ENCODE measurements at regions of chr14 and their contacts with region 1.

Region 1: DNA sequence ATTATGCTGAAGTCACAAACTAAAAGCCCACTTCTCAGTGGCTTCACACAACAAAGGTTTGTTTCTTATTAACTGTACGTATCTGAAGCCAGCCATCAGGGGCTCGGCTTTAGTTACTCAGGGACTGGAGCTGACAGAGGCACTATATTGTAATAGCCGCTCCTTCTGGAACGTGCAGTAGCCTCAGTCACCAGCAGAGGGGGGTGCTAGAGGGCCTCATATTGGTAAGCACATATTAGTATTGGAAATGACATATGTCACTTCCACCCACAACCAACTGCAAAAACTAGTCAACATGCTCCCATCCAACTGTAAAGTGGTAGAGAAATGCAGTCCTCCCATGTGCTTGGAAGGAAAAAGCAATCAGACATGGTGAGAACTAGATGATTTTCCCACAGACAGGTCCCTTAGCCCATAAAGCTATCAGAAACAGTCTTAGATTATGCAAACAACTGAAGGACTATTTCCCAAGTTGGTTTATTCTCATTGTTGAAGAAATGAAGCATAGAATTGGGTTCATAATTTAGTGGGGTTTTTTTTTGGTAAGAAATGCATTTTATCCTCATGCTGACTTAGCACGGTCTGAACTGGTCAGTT is 183.6 kb upstream of the G2E3 start:
- DNase-seq: peak; percentile 74
- H3K4me3 Mint-ChIP-seq: no peak overlapping the region
- H3K27ac Mint-ChIP-seq: no peak overlapping the region
- H3K4me1 Mint-ChIP-seq: no peaks in the 10 kb centered on the region
- H3K27me3 Mint-ChIP-seq: no peaks in the 10 kb centered on the region

Region 2: GRCh38 chr14:30521899-30522736 is 146.7 kb after region 1 on chr14:
- CTCF ChIA-PET with region 1: interaction called, 22 read pairs
- DNase-seq: no peak
- H3K4me3 Mint-ChIP-seq: no peak overlapping the region
- H3K27ac Mint-ChIP-seq: no peak overlapping the region
- H3K4me1 Mint-ChIP-seq: peaks cover 9% of the 10 kb centered on the region
- H3K27me3 Mint-ChIP-seq: no peaks in the 10 kb centered on the region

Measured in activated naive CD4-positive, alpha-beta T cell treated with anti-CD3 and anti-CD28 coated beads, Interleukin-2, amount 10 ng/mL, durations not matched to agents 7 days and 5 days (primary cell).